GM10248 (cell line): ENCODE measurements at regions of chr17 and their contacts with region 1.

Region 1: GRCh38 chr17:75601057-75602051 is 13.8 kb downstream of the MYO15B start:
- DNase-seq: peak; percentile 81
- CTCF ChIP-seq: peak; percentile 85

Region 2: DNA sequence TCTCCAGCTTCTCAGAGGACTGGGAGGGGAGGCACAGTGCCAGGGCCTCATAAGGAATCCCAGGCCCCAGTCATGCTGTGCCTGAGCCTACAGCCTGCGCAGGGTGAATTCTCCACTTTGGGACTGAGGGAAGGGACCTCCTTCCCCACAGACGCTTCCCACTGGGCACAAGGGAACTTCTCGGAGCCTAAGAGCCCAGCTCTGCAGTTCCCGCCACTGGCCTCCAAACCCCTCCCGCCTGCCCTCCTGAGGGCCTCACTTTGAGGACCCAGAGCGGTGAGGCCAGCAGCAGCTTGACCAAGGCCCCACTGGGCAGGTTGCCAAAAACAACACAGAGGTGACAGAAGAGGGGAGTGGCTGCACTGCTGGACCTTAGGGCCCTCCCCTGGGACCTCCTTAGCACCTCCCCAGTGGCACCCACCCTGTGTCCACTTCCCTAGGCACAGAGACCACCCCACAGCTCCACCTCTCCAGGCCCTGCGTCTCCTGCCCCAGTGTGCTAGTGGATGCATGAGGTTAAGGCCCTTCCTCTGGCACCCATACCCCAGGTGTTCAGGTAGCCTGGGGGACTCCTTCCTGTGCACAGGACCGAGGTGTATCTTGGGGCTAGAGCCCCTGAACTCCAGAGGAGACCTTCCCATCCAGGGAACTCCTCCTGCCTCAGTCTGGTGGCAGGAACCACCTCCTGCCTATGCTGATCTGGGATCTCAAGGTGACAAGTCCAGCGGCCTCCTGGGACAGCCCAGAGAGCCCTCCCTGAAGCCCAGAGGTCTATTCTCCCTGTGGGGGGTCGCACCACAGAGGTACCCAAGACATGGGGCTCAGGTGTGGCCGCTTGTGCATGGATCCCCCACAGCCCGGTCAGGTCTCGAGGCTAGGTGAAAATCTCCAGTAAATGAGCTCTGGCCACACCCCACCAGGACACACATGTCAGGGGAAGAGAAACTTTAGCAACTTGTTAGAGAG is 89.5 kb before region 1 on chr17:
- CTCF ChIA-PET with region 1: no interaction called
- POLR2A ChIA-PET with region 1: no interaction called
- DNase-seq: no peak
- CTCF ChIP-seq: no peak

Region 3: DNA sequence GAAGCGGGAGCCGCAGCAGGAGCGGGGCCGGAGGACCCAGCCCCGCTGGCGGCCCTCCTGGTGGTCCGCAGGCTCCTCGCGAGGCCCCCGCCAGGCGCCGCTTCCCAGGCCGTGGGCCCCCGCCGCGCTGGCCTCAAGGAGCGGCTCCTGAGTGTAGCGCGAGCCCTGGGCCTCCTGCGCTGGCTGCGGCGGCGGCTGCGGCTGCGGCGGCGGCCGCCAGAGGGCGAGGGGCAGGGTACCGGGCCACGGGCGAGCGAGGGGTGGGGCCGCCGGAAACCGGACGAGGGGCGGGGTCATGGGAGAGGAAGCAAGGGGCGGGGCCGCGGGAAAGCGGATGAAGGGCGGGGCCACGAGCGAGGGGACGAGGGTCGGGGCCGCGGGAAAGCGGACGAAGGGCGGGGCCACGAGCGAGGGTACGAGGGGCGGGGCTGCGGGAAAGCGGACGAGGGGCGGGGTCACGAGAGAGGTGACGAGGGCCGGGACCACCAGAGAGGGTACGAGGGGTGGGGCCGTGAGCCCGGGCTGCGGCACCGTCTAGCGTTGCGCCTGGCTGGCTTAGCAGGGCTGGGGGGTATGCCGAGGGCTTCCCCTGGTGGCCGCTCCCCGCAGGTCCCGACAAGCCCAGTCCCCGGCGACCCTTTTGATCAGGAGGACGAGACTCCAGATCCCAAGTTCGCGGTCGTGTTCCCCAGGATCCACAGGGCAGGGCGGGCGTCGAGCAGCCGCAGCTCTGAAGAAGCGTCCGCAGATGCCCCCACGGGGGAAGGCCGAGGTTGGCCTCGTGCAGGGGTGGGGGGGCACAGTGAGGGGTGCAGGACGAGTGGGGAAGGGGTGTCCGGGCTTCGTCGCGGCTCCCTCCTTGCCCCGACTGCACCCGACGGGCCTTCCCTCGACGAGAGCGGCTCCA is 12.1 kb before region 1 on chr17:
- CTCF ChIA-PET with region 1: interaction called, 61 read pairs
- POLR2A ChIA-PET with region 1: interaction called, 4 read pairs
- DNase-seq: peak; percentile 100
- CTCF ChIP-seq: peak; percentile 81

Region 4: DNA sequence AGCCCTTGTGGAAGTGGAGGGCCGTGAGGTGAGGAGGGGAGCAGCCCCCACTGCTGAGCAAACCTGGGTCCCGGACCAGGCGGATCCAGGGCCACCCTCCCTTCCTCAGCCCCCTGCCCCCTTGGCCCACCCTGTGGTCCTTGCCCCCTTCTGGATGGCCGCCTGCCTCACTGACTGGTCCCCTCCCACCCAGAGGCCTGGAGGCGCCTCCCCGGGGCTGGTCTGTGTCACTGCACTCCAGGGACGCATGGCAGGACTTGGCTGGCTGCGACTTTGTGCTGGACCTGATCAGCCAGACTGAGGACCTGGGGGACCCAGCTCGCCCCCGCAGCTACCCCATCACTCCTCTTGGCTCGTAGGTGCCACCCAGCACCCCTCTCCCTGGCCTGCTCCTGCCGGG is 12.7 kb after region 1 on chr17:
- CTCF ChIA-PET with region 1: interaction called, 28 read pairs
- POLR2A ChIA-PET with region 1: no interaction called
- DNase-seq: no peak
- CTCF ChIP-seq: no peak

Region 5: GRCh38 chr17:75619506-75620431 is 18.4 kb after region 1 on chr17:
- CTCF ChIA-PET with region 1: interaction called, 19 read pairs
- POLR2A ChIA-PET with region 1: no interaction called
- DNase-seq: peak; percentile 59
- CTCF ChIP-seq: peak; percentile 28

Region 6: GRCh38 chr17:75625813-75626486 is 24.6 kb after region 1 on chr17:
- CTCF ChIA-PET with region 1: interaction called, 76 read pairs
- POLR2A ChIA-PET with region 1: no interaction called
- DNase-seq: peak; percentile 57
- CTCF ChIP-seq: peak; percentile 54

Region 7: GRCh38 chr17:75652915-75653549 is 51.7 kb after region 1 on chr17:
- CTCF ChIA-PET with region 1: interaction called, 12 read pairs
- POLR2A ChIA-PET with region 1: no interaction called
- DNase-seq: peak; percentile 58
- CTCF ChIP-seq: peak; percentile 69

Region 8: GRCh38 chr17:75673487-75673886 is 72.1 kb after region 1 on chr17:
- CTCF ChIA-PET with region 1: interaction called, 12 read pairs
- POLR2A ChIA-PET with region 1: no interaction called
- DNase-seq: no peak
- CTCF ChIP-seq: no peak